IMR-90 (cell line): ENCODE measurements at regions of chrX and their contacts with region 1.

Region 1: DNA sequence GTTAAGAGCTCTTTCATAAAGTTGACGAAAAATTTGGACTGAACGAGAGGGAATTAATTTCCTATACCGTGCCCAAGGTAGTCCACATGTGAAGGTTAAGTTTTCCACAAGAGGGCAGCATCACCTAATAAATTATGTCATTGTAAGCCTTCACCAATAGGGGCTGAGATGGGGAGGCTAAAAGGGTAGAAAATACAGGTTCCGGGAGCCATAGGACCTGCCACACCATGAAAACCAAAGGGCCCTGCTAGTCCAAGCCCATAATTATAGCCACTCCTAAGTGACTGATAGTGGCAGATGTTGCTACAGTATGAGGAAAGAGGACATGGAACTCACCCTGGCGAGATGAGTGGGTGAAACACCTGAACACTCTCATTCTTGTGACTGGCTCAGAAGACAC is 122.2 kb downstream of the SHROOM4 start:
- DNase-seq: peak; percentile 48
- ATAC-seq: peak; percentile 86
- H3K4me3 ChIP-seq: no peak overlapping the region
- H3K27ac ChIP-seq: no peak overlapping the region
- H3K4me1 ChIP-seq: no peaks in the 10 kb centered on the region
- H3K27me3 ChIP-seq: no peaks in the 10 kb centered on the region
- CTCF ChIP-seq: peak; percentile 72
- POLR2A ChIP-seq: no peak
- RAD21 ChIP-seq: peak; percentile 68

Region 2: GRCh38 chrX:49915361-49916222 is 776.2 kb before region 1 on chrX:
- CTCF ChIA-PET with region 1: no interaction called
- POLR2A ChIA-PET with region 1: no interaction called
- dilution Hi-C with region 1: no loop called
- in situ Hi-C with region 1: no loop called
- intact Hi-C with region 1: loop called (anchors 10 kb)
- DNase-seq: peak; percentile 62
- ATAC-seq: peak; percentile 96
- H3K4me3 ChIP-seq: no peak overlapping the region
- H3K27ac ChIP-seq: no peak overlapping the region
- H3K4me1 ChIP-seq: no peaks in the 10 kb centered on the region
- H3K27me3 ChIP-seq: peaks cover 7% of the 10 kb centered on the region
- CTCF ChIP-seq: peak; percentile 87
- POLR2A ChIP-seq: no peak
- RAD21 ChIP-seq: peak; percentile 81

Region 3: GRCh38 chrX:50877370-50877769 is 185.6 kb after region 1 on chrX:
- CTCF ChIA-PET with region 1: no interaction called
- POLR2A ChIA-PET with region 1: no interaction called
- dilution Hi-C with region 1: no loop called
- in situ Hi-C with region 1: no loop called
- intact Hi-C with region 1: no loop called
- DNase-seq: no peak
- ATAC-seq: no peak
- H3K4me3 ChIP-seq: no peak overlapping the region
- H3K27ac ChIP-seq: no peak overlapping the region
- H3K4me1 ChIP-seq: no peaks in the 10 kb centered on the region
- H3K27me3 ChIP-seq: peaks cover 5% of the 10 kb centered on the region
- CTCF ChIP-seq: no peak
- POLR2A ChIP-seq: no peak
- RAD21 ChIP-seq: no peak

Region 4: GRCh38 chrX:50920132-50920531 is 228.3 kb after region 1 on chrX:
- CTCF ChIA-PET with region 1: no interaction called
- POLR2A ChIA-PET with region 1: no interaction called
- dilution Hi-C with region 1: no loop called
- in situ Hi-C with region 1: loop called (anchors 10 kb)
- intact Hi-C with region 1: loop called (anchors 1 kb)
- DNase-seq: peak; percentile 18
- ATAC-seq: no peak
- H3K4me3 ChIP-seq: no peak overlapping the region
- H3K27ac ChIP-seq: no peak overlapping the region
- H3K4me1 ChIP-seq: no peaks in the 10 kb centered on the region
- H3K27me3 ChIP-seq: peaks cover 5% of the 10 kb centered on the region
- CTCF ChIP-seq: peak; percentile 49
- POLR2A ChIP-seq: no peak
- RAD21 ChIP-seq: peak; percentile 52

Region 5: GRCh38 chrX:50988649-50989048 is 296.8 kb after region 1 on chrX:
- CTCF ChIA-PET with region 1: interaction called, 3 read pairs
- POLR2A ChIA-PET with region 1: no interaction called
- dilution Hi-C with region 1: no loop called
- in situ Hi-C with region 1: no loop called
- intact Hi-C with region 1: loop called (anchors 2 kb)
- DNase-seq: peak; percentile 33
- ATAC-seq: peak; percentile 75
- H3K4me3 ChIP-seq: no peak overlapping the region
- H3K27ac ChIP-seq: no peak overlapping the region
- H3K4me1 ChIP-seq: no peaks in the 10 kb centered on the region
- H3K27me3 ChIP-seq: peaks cover 8% of the 10 kb centered on the region; the same call in 1 of the 2 replicates
- CTCF ChIP-seq: peak; percentile 63
- POLR2A ChIP-seq: no peak
- RAD21 ChIP-seq: peak; percentile 54

Region 6: DNA sequence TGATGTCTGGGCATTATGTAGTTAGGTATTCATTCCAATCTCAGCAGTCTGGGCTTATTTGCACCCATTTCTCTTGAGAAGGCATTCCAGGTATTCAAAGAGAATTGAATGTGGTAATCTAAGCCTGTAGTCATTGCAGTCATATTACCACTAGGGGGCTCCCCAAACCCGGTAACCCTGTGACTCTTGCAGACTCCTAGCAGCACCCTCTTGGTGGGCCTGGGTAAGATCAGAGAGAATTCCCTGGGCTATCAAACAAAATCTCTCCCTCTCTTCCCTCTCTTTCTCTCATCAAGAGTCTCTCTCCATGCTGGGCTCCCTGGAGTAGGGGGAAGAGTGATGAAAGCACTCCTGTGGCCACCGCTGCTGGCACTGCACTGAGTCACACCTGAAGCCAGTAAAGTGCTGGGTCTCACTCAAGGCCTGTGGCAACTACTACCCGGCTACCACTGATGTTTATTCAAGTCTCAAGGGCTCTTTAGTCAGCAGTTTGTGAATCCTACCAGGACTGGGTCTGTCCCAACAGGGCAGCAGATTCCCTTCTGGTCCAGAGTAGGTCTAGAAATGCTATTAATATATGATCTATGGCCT is 453.1 kb after region 1 on chrX:
- CTCF ChIA-PET with region 1: no interaction called
- POLR2A ChIA-PET with region 1: no interaction called
- dilution Hi-C with region 1: no loop called
- in situ Hi-C with region 1: no loop called
- intact Hi-C with region 1: no loop called
- DNase-seq: peak; percentile 10
- ATAC-seq: peak; percentile 48; the same call in 1 of the 2 replicates
- H3K4me3 ChIP-seq: no peak overlapping the region
- H3K27ac ChIP-seq: no peak overlapping the region
- H3K4me1 ChIP-seq: no peaks in the 10 kb centered on the region
- H3K27me3 ChIP-seq: no peaks in the 10 kb centered on the region
- CTCF ChIP-seq: peak; percentile 51
- POLR2A ChIP-seq: no peak
- RAD21 ChIP-seq: peak; percentile 35

Region 7: GRCh38 chrX:51461053-51462044 is 769.5 kb after region 1 on chrX:
- CTCF ChIA-PET with region 1: no interaction called
- POLR2A ChIA-PET with region 1: no interaction called
- dilution Hi-C with region 1: no loop called
- in situ Hi-C with region 1: no loop called
- intact Hi-C with region 1: loop called (anchors 10 kb)
- DNase-seq: peak; percentile 42
- ATAC-seq: peak; percentile 60; the same call in 1 of the 2 replicates
- H3K4me3 ChIP-seq: no peak overlapping the region
- H3K27ac ChIP-seq: no peak overlapping the region
- H3K4me1 ChIP-seq: no peaks in the 10 kb centered on the region
- H3K27me3 ChIP-seq: peaks cover 13% of the 10 kb centered on the region
- CTCF ChIP-seq: peak; percentile 65
- POLR2A ChIP-seq: no peak
- RAD21 ChIP-seq: peak; percentile 45